ENCODE measurements at regions of chr17 and their contacts with region 1.

Region 1: DNA sequence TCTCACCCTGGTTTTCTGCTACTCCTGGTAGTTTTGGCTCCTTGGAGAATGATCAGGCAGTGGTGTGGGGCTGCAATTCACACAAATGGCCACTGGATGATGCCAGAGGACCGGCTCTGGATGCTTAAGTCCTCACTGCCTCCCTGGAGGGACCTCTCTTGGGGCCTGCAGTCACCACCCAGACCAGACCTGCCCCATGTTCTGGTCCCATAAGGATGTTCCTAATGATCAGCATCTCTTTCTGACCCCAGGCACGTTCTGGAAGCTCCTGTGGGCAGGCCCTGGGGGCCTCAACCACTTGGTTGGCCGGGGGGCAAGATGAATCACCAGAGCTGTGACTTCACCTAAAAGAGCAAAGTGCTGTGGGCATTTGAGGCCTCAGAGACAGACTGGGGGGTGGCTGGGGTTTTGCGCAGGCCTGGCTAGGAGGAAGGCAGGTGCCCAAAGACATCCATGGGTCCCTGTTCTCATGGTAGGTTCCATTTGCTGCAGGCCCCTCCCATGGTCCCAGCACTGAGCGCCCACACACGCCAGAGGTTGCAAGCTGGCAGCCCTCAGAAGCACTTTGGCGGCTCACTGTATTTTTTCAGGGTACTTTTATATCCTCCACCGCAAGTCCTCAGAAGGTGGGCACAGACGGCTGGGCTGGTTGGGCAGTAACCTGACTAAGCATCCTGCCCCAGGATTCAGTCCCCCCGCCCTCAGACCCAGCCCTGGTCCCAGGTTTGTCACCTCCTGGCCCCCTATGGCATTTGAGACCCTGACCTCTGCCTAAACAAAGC is 53.2 kb downstream of the NT5M start:
- DNase-seq: peak; percentile 61 to 72 (median 70)
- H3K4me3 ChIP-seq: no peak overlapping the region
- H3K4me3 Mint-ChIP-seq: no peak overlapping the region
- H3K27ac ChIP-seq: no peak overlapping the region
- H3K27ac Mint-ChIP-seq: peak overlapping the region in 1 of 7 donors; percentile 54
- H3K4me1 ChIP-seq: peaks cover 2 to 3% of the 10 kb centered on the region in 2 donors
- H3K4me1 Mint-ChIP-seq: peaks cover 2% of the 10 kb centered on the region
- H3K27me3 ChIP-seq: no peaks in the 10 kb centered on the region
- H3K27me3 Mint-ChIP-seq: peaks cover 0 to 4% (median 2%) of the 10 kb centered on the region in 3 donors
- CTCF ChIP-seq: peak; percentile 98

Region 2: DNA sequence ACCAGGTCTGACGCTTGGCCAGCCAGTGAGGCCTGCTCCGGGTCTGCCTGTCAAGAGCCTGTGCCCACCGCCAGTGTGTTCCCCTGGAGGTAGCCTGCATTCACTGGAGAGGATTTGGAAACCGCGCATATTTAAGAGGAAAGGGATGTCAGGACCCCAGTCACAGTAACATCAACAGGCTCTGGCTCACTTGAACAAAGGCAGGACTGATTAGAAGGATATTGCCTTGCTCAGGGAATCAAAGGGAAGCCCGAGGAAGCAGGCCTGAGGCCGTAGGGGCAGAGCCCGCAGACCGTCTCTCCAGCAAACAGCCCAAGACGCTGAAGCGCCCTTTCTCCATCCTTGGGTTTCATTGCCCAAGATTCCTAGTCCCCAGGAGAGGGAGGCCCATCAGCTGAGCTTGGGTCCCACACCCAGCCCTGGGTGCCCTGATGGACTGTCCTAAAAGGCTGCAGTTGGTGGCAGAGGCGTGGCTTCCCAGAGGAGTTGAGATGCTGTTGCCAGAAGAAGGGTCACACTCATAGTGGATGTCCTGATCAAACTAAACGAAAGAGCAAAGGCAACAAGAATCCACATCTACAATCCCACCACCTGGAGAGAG is 30.0 kb before region 1 on chr17:
- intact Hi-C with region 1: no loop called
- DNase-seq: no peak
- H3K4me3 ChIP-seq: no peak overlapping the region
- H3K4me3 Mint-ChIP-seq: no peak overlapping the region
- H3K27ac ChIP-seq: no peak overlapping the region
- H3K27ac Mint-ChIP-seq: no peak overlapping the region
- H3K4me1 ChIP-seq: no peaks in the 10 kb centered on the region
- H3K4me1 Mint-ChIP-seq: no peaks in the 10 kb centered on the region
- H3K27me3 ChIP-seq: no peaks in the 10 kb centered on the region
- H3K27me3 Mint-ChIP-seq: peaks cover 0 to 4% (median 0%) of the 10 kb centered on the region in 3 donors
- CTCF ChIP-seq: no peak

Region 3: DNA sequence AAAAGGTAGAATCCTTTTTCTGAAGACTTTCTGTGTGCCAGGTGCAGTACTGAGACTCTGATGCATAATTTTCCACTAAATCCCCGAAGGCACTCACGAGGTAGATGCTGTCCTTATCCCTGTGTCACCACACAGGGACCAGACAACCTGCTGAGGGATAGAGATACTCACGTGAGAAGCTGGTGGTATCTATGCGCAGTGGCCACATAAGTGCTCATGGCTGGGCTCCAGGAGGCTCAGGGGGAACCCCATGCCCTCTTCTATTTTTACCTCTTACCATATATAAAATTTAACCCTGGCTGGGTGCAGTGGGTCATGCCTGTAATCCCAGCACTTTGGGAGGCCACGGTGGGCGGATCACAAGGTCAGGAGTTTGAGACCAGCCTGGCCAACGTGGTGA is 14.9 kb before region 1 on chr17:
- intact Hi-C with region 1: no loop called
- DNase-seq: no peak
- H3K4me3 ChIP-seq: no peak overlapping the region
- H3K4me3 Mint-ChIP-seq: no peak overlapping the region
- H3K27ac ChIP-seq: no peak overlapping the region
- H3K27ac Mint-ChIP-seq: no peak overlapping the region
- H3K4me1 ChIP-seq: no peaks in the 10 kb centered on the region
- H3K4me1 Mint-ChIP-seq: peaks cover 2% of the 10 kb centered on the region
- H3K27me3 ChIP-seq: no peaks in the 10 kb centered on the region
- H3K27me3 Mint-ChIP-seq: peaks cover 0 to 2% (median 1%) of the 10 kb centered on the region in 3 donors
- CTCF ChIP-seq: no peak

Region 4: GRCh38 chr17:17440010-17440843 is 83.9 kb after region 1 on chr17:
- intact Hi-C with region 1: loop called (anchors 1 to 5 kb)
- DNase-seq: peak; percentile 54 to 63 (median 56)
- H3K4me3 ChIP-seq: no peak overlapping the region
- H3K4me3 Mint-ChIP-seq: no peak overlapping the region
- H3K27ac ChIP-seq: no peak overlapping the region
- H3K27ac Mint-ChIP-seq: no peak overlapping the region
- H3K4me1 ChIP-seq: no peaks in the 10 kb centered on the region
- H3K4me1 Mint-ChIP-seq: peaks cover 5% of the 10 kb centered on the region
- H3K27me3 ChIP-seq: no peaks in the 10 kb centered on the region
- H3K27me3 Mint-ChIP-seq: peaks cover 0 to 4% (median 3%) of the 10 kb centered on the region in 3 donors
- CTCF ChIP-seq: peak; percentile 77

Region 5: GRCh38 chr17:17496189-17497064 is 140.1 kb after region 1 on chr17 and contains the start of gene RASD1:
- intact Hi-C with region 1: loop called (anchors 2 to 5 kb)
- DNase-seq: peak; percentile 80 to 88 (median 85)
- H3K4me3 ChIP-seq: peak within 1 kb of the TSS; percentile 52 to 90 (median 75)
- H3K4me3 Mint-ChIP-seq: peak within 1 kb of the TSS; percentile 88 to 97
- H3K27ac ChIP-seq: peak within 1 kb of the TSS; percentile 54 to 80
- H3K27ac Mint-ChIP-seq: peak within 1 kb of the TSS in 6 of 7 donors; percentile 25 to 90 (median 72)
- H3K4me1 ChIP-seq: peaks cover 21 to 30% of the 10 kb centered on the region in 2 donors
- H3K4me1 Mint-ChIP-seq: peaks cover 20% of the 10 kb centered on the region
- H3K27me3 ChIP-seq: peaks cover 6 to 34% of the 10 kb centered on the region in 2 donors
- H3K27me3 Mint-ChIP-seq: peaks cover 31 to 41% (median 37%) of the 10 kb centered on the region in 3 donors
- CTCF ChIP-seq: peak; percentile 97
- polyA plus RNA-seq, gene RASD1: 0.88 to 12.4 (median 1.3) TPM

Region 6: GRCh38 chr17:17641621-17642409 is 285.5 kb after region 1 on chr17:
- intact Hi-C with region 1: loop called (anchors 1 to 2 kb)
- DNase-seq: peak; percentile 75 to 83 (median 77)
- H3K4me3 ChIP-seq: no peak overlapping the region
- H3K4me3 Mint-ChIP-seq: no peak overlapping the region
- H3K27ac ChIP-seq: no peak overlapping the region
- H3K27ac Mint-ChIP-seq: peak overlapping the region in 4 of 7 donors; percentile 24 to 81 (median 48)
- H3K4me1 ChIP-seq: peaks cover 41 to 48% of the 10 kb centered on the region in 2 donors
- H3K4me1 Mint-ChIP-seq: peaks cover 43% of the 10 kb centered on the region
- H3K27me3 ChIP-seq: no peaks in the 10 kb centered on the region
- H3K27me3 Mint-ChIP-seq: peaks cover 0 to 3% (median 2%) of the 10 kb centered on the region in 3 donors
- CTCF ChIP-seq: peak; percentile 82

Measured in CD14-positive monocyte (primary cell).